Sigmoid colon (tissue), 7 donors: ENCODE measurements at regions of chr7 and their contacts with region 1.

Region 1: GRCh38 chr7:101953248-101953819 is 135.9 kb downstream of the CUX1 start:
- DNase-seq: peak; percentile 94
- H3K4me3 ChIP-seq: no peak overlapping the region
- H3K27ac ChIP-seq: peak overlapping the region; percentile 85 to 93 (median 87)
- H3K4me1 ChIP-seq: peaks cover 0 to 94% (median 79%) of the 10 kb centered on the region in 4 donors
- H3K27me3 ChIP-seq: no peaks in the 10 kb centered on the region
- CTCF ChIP-seq: no peak
- EP300 ChIP-seq: peak; percentile 91 to 96 (median 93)
- POLR2A ChIP-seq: no peak

Region 2: DNA sequence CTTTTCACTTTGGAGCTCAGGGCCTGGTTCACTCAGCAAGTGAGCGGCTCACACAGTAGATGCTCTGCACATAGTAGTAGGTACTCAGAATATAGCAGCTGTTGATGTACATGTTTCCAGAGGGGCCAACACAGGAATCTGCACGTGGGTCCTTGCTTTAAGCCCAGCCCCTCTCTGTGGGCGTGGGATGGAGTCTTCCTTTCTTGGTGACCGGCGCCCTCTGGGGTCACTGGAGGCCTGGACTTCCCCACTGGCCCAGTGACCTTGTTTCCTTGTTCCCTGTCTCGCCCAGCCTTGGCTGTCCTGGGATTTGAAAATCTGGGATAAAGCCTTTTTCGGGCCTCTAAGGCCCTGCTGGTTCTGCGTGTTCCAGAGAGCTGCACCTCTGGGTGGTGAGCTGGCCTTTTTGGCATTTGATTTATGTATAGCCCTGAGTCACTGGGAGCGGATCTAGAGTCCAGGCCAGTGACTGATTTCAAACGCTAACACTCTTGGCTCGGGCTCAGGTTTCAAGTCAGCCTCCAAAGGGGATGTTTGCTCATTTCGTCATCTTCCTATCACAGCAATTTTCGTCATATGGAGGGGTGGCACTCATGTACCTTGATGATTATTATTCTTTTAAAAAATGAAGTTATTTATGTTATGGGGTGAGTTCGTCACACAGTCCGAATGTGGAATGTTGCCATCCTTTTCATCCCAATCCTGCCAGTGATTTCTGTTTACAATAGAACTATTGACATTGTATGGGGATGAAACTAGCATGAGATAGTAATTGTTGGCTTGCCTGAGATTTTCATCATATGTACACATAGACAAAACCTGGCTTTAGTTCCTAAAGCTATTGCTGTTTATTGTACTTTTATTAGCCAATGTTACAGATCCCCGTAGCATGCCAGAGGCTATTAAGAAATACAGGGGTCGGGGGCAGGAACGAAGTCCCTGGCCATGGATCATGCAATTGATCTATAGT is 70.5 kb before region 1 on chr7:
- intact Hi-C with region 1: loop called (anchors 5 kb)
- DNase-seq: peak; percentile 97
- H3K4me3 ChIP-seq: no peak overlapping the region
- H3K27ac ChIP-seq: peak overlapping the region; percentile 82 to 93 (median 87)
- H3K4me1 ChIP-seq: peaks cover 0 to 89% (median 78%) of the 10 kb centered on the region in 4 donors
- H3K27me3 ChIP-seq: no peaks in the 10 kb centered on the region
- CTCF ChIP-seq: no peak
- EP300 ChIP-seq: peak; percentile 27 to 80 (median 63)
- POLR2A ChIP-seq: no peak

Region 3: GRCh38 chr7:101911800-101912715 is 41.3 kb before region 1 on chr7:
- intact Hi-C with region 1: loop called (anchors 2 kb)
- DNase-seq: peak; percentile 97
- H3K4me3 ChIP-seq: peak overlapping the region in 2 of 4 donors; percentile 38 to 45
- H3K27ac ChIP-seq: peak overlapping the region; percentile 38 to 93 (median 86)
- H3K4me1 ChIP-seq: peaks cover 0 to 60% (median 55%) of the 10 kb centered on the region in 4 donors
- H3K27me3 ChIP-seq: no peaks in the 10 kb centered on the region
- CTCF ChIP-seq: peak in 1 of 4 experiments; percentile 17
- EP300 ChIP-seq: peak; percentile 69 to 99 (median 98)
- POLR2A ChIP-seq: no peak

Region 4: DNA sequence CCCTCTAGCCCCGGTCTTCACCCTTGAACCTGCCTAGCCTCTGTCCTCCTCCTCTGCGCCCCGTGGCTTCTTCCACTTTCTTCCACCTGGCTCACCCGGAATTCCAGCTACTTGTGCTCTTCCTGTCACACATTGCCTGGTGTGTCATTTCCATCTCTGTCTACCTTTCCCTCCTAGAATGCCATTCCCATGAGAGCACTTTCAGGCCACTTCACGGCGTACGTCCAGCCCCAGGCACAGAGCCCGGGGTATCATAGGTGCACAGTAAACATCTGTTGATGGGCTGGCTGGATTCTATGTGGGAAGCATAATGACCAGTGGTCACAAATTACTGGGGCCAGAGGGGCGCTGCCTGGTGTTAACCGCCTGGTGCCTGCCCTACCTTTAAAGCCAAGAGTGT is 25.3 kb after region 1 on chr7:
- intact Hi-C with region 1: no loop called
- DNase-seq: no peak
- H3K4me3 ChIP-seq: no peak overlapping the region
- H3K27ac ChIP-seq: no peak overlapping the region
- H3K4me1 ChIP-seq: peaks cover 0 to 7% (median 4%) of the 10 kb centered on the region in 4 donors
- H3K27me3 ChIP-seq: no peaks in the 10 kb centered on the region
- CTCF ChIP-seq: no peak
- EP300 ChIP-seq: no peak
- POLR2A ChIP-seq: no peak